ENCODE measurements at regions of chr7 and their contacts with region 1.

Region 1: GRCh38 chr7:30276203-30276900 is 8.0 kb upstream of the ZNRF2 start:
- DNase-seq: peak; percentile 71
- H3K4me3 ChIP-seq: no peak overlapping the region
- H3K27ac ChIP-seq: no peak overlapping the region
- H3K4me1 ChIP-seq: no peaks in the 10 kb centered on the region
- H3K27me3 ChIP-seq: no peaks in the 10 kb centered on the region

Region 2: GRCh38 chr7:30469303-30469702 is 193.0 kb after region 1 on chr7:
- in situ Hi-C with region 1: no loop called
- DNase-seq: peak; percentile 99
- H3K4me3 ChIP-seq: peak overlapping the region; percentile 57
- H3K27ac ChIP-seq: peak overlapping the region; percentile 92
- H3K4me1 ChIP-seq: peaks cover 82% of the 10 kb centered on the region
- H3K27me3 ChIP-seq: no peaks in the 10 kb centered on the region

Region 3: DNA sequence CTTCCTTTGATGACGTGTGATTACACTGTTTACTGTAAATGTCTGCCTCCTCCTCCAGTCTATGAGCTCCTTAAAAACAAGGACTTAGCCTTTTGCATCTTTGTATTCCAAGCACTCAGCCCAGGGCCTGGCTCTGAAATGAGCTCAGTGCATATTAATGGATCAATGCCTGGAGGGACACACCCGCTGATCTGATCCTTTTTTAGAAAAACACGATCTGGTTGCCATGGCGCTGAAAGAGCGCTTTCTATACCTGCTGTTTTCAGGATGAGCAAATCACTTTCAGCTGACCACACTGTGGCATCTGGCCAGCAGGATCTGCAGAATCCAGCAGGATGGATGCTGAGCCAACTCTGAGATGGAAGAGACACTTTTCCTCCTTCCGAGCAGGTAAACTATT is 280.5 kb after region 1 on chr7:
- in situ Hi-C with region 1: loop called (anchors 5 kb)
- DNase-seq: no peak
- H3K4me3 ChIP-seq: no peak overlapping the region
- H3K27ac ChIP-seq: no peak overlapping the region
- H3K4me1 ChIP-seq: no peaks in the 10 kb centered on the region
- H3K27me3 ChIP-seq: no peaks in the 10 kb centered on the region